HCT116 (cell line): ENCODE measurements at regions of chr1 and their contacts with region 1.

Region 1: GRCh38 chr1:117059678-117060440 is at the start of gene TTF2:
- DNase-seq: peak; percentile 99
- ATAC-seq: peak; percentile 96
- H3K4me3 ChIP-seq: peak within 1 kb of the TSS; percentile 90 to 95
- H3K27ac ChIP-seq: peak within 1 kb of the TSS; percentile 85
- H3K4me1 ChIP-seq: peaks cover 4 to 15% of the 10 kb centered on the region in 2 experiments; a peak in 3 of 4 replicates
- H3K27me3 ChIP-seq: no peaks in the 10 kb centered on the region
- CTCF ChIP-seq: no peak
- POLR2A ChIP-seq: peak; percentile 62
- RAD21 ChIP-seq: no peak
- total RNA-seq, gene TTF2: 60.3 TPM

Region 2: GRCh38 chr1:116504308-116505156 is 555.3 kb before region 1 on chr1:
- CTCF ChIA-PET with region 1: interaction called, 3 read pairs
- POLR2A ChIA-PET with region 1: no interaction called
- RAD21 ChIA-PET with region 1: no interaction called
- intact Hi-C with region 1: loop called (anchors 10 kb)
- DNase-seq: no peak
- ATAC-seq: peak; percentile 35
- H3K4me3 ChIP-seq: no peak overlapping the region
- H3K27ac ChIP-seq: peak overlapping the region; percentile 28
- H3K4me1 ChIP-seq: peaks cover 51 to 59% of the 10 kb centered on the region in 2 experiments
- H3K27me3 ChIP-seq: no peaks in the 10 kb centered on the region
- CTCF ChIP-seq: no peak
- POLR2A ChIP-seq: no peak
- RAD21 ChIP-seq: no peak

Region 3: GRCh38 chr1:116674011-116674531 is 385.8 kb before region 1 on chr1:
- CTCF ChIA-PET with region 1: interaction called, 4 read pairs
- POLR2A ChIA-PET with region 1: no interaction called
- RAD21 ChIA-PET with region 1: no interaction called
- intact Hi-C with region 1: loop called (anchors 5 kb)
- DNase-seq: no peak
- ATAC-seq: no peak
- H3K4me3 ChIP-seq: no peak overlapping the region
- H3K27ac ChIP-seq: no peak overlapping the region
- H3K4me1 ChIP-seq: peaks cover 0 to 5% of the 10 kb centered on the region in 2 experiments; a peak in 1 of 4 replicates
- H3K27me3 ChIP-seq: no peaks in the 10 kb centered on the region
- CTCF ChIP-seq: no peak
- POLR2A ChIP-seq: no peak
- RAD21 ChIP-seq: no peak

Region 4: DNA sequence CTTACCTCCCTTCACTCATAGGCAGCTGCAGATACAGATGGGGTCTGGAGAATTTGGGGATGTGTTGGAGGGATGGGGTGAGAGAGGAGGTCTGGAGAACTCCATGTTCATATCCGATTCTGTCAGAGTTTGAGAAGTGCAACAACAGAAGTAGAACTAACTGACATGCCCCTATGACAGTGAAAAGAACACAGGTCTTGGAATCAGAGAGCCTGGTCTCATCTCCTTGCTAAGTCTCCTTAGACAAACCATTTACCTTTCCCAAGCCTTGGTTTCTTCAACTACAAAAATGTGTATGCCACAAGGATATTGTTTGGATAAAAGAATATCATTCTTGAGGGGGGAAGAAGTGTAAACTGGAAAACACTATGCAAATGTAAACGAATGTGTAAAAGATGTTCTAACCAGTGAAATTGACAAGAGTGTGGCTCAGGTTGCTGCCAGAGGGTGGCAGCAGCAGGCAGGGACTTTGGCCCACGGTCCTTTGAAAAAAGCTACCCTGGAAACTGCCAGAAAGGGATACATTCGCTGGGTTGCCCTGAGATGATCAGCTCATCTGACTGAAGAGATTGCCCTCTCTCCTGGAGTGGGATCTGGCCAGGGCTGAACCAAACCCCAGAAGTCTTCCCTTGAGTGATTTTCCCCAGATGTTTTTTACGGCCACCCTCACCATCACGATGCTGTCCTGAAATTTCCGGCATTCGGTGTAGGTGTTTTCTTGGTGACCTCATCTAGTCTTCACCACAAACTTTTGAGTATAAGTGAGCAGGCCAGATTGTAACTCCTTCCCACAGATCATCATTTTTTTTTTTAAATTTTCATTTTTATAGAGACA is 322.6 kb before region 1 on chr1:
- CTCF ChIA-PET with region 1: interaction called, 18 read pairs
- POLR2A ChIA-PET with region 1: no interaction called
- RAD21 ChIA-PET with region 1: interaction called in 1 of 2 experiments, 3 read pairs
- intact Hi-C with region 1: loop called (anchors 1 kb)
- DNase-seq: peak; percentile 10
- ATAC-seq: peak; percentile 87
- H3K4me3 ChIP-seq: no peak overlapping the region
- H3K27ac ChIP-seq: no peak overlapping the region
- H3K4me1 ChIP-seq: no peaks in the 10 kb centered on the region
- H3K27me3 ChIP-seq: no peaks in the 10 kb centered on the region
- CTCF ChIP-seq: peak; percentile 80 to 83 (median 82); a peak in 5 of 6 replicates
- POLR2A ChIP-seq: no peak
- RAD21 ChIP-seq: peak; percentile 86

Region 5: DNA sequence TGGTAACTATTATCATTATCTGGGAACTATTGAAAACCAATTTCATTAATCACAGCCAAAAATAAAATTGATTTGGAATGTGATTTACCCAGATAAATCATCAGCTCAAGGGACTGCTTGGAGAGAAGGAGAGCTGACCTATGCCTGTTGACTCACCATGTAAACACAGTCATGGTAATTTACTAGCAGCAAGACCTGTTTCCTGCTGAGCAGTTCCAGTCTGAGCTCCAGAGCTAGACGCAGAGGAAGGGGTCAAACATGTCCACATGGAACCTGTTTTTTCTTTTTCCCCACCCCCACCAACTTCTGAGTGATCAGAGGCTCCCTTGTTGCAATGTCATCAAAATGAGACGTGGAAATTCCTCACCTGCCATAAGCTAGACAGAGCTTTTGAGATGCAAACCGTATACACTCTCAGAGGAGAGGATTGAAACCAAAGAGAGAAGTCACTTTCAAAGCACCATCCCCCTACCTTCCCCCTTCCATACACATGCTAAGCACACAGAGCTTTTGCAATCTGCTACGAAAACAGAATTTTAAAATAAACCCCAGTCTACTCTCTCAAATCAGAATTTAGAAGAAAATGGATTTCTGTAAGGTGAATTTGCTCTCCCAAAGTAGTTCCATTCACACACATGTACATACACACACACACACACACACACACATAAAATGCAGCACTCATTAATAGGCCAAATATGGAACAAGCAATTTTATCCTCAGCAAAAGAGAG is 206.0 kb before region 1 on chr1:
- CTCF ChIA-PET with region 1: no interaction called
- POLR2A ChIA-PET with region 1: no interaction called
- RAD21 ChIA-PET with region 1: no interaction called
- intact Hi-C with region 1: loop called (anchors 1 kb)
- DNase-seq: peak; percentile 42
- ATAC-seq: peak; percentile 94
- H3K4me3 ChIP-seq: peak overlapping the region in 1 of 2 experiments; percentile 16; a peak in 2 of 4 replicates
- H3K27ac ChIP-seq: no peak overlapping the region
- H3K4me1 ChIP-seq: peaks cover 16 to 18% of the 10 kb centered on the region in 2 experiments
- H3K27me3 ChIP-seq: 0 out of 2 replicates have a peak, but pooled peaks cover 3% of the 10 kb centered on the region
- CTCF ChIP-seq: no peak
- POLR2A ChIP-seq: no peak
- RAD21 ChIP-seq: no peak; the same call in 1 of the 2 replicates

Region 6: GRCh38 chr1:117895482-117896114 is 835.7 kb after region 1 on chr1:
- CTCF ChIA-PET with region 1: no interaction called
- POLR2A ChIA-PET with region 1: no interaction called
- RAD21 ChIA-PET with region 1: no interaction called
- intact Hi-C with region 1: loop called (anchors 10 kb)
- DNase-seq: peak; percentile 54
- ATAC-seq: peak; percentile 70
- H3K4me3 ChIP-seq: no peak overlapping the region
- H3K27ac ChIP-seq: no peak overlapping the region
- H3K4me1 ChIP-seq: no peaks in the 10 kb centered on the region
- H3K27me3 ChIP-seq: no peaks in the 10 kb centered on the region
- CTCF ChIP-seq: peak; percentile 69 to 79 (median 71); a peak in 5 of 6 replicates
- POLR2A ChIP-seq: no peak
- RAD21 ChIP-seq: peak; percentile 80